ENCODE measurements at regions of chr9 and their contacts with region 1.

Region 1: GRCh38 chr9:121686930-121687541 is 35.6 kb downstream of the DAB2IP start:
- DNase-seq: peak; percentile 89
- ATAC-seq: peak; percentile 80
- H3K4me3 Mint-ChIP-seq: no peak overlapping the region
- H3K27ac Mint-ChIP-seq: no peak overlapping the region
- H3K4me1 Mint-ChIP-seq: peaks cover 21% of the 10 kb centered on the region
- H3K27me3 Mint-ChIP-seq: no peaks in the 10 kb centered on the region
- CTCF ChIP-seq: peak; percentile 68; the same call in 1 of the 2 replicates

Region 2: GRCh38 chr9:121598965-121599871 is 87.8 kb before region 1 on chr9:
- CTCF ChIA-PET with region 1: interaction called, 18 read pairs
- POLR2A ChIA-PET with region 1: no interaction called
- DNase-seq: peak; percentile 94
- ATAC-seq: peak; percentile 83
- H3K4me3 Mint-ChIP-seq: peak overlapping the region; percentile 80
- H3K27ac Mint-ChIP-seq: peak overlapping the region; percentile 36; the same call in 1 of the 2 replicates
- H3K4me1 Mint-ChIP-seq: peaks cover 36% of the 10 kb centered on the region
- H3K27me3 Mint-ChIP-seq: peaks cover 21% of the 10 kb centered on the region
- CTCF ChIP-seq: no peak

Region 3: DNA sequence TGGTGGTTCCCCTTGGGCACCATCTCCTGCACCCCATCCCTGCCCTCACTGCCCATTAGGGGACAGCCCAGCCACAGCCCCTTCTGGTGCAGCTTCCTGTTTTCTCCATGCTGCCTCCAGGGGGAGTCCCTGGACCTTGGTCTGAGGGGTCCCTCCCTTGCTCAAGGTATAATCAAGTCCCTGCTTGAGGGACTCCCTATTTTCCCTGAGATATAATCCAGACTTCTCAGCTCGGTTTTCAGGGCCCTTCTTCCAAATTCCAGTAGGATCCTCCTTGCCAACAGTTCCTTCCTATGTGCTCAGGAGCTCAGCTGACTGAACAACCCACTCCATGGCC is 66.0 kb before region 1 on chr9:
- CTCF ChIA-PET with region 1: interaction called, 29 read pairs
- POLR2A ChIA-PET with region 1: no interaction called
- DNase-seq: peak; percentile 74
- ATAC-seq: peak; percentile 97
- H3K4me3 Mint-ChIP-seq: no peak overlapping the region
- H3K27ac Mint-ChIP-seq: peak overlapping the region; percentile 32
- H3K4me1 Mint-ChIP-seq: peaks cover 20% of the 10 kb centered on the region
- H3K27me3 Mint-ChIP-seq: no peaks in the 10 kb centered on the region
- CTCF ChIP-seq: no peak

Region 4: DNA sequence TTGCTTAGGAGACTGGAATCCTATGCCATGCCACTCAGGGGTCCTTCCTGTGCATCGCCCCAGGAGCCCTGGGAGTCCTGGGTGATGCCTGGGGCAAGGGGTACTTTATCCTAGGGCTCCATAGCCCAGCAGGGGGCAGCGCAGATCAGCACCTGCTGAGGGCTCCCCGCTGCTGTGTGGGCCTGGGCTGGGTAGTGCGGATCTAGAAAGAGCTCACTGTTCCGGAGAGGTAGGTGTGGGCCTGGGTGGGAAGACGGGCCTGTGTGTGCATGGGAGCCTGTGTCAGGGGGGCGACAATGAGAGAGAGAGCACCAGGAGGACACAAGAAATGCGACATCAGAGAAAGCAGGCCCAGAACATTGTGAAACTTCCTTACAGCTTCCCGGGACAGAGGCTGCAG is 47.0 kb before region 1 on chr9:
- CTCF ChIA-PET with region 1: interaction called, 115 read pairs
- POLR2A ChIA-PET with region 1: no interaction called
- DNase-seq: peak; percentile 76
- ATAC-seq: peak; percentile 75
- H3K4me3 Mint-ChIP-seq: no peak overlapping the region
- H3K27ac Mint-ChIP-seq: 0 out of 2 replicates have a peak overlapping the region, but pooled peaks have one; percentile 23
- H3K4me1 Mint-ChIP-seq: peaks cover 40% of the 10 kb centered on the region
- H3K27me3 Mint-ChIP-seq: no peaks in the 10 kb centered on the region
- CTCF ChIP-seq: no peak; the same call in 1 of the 2 replicates

Region 5: DNA sequence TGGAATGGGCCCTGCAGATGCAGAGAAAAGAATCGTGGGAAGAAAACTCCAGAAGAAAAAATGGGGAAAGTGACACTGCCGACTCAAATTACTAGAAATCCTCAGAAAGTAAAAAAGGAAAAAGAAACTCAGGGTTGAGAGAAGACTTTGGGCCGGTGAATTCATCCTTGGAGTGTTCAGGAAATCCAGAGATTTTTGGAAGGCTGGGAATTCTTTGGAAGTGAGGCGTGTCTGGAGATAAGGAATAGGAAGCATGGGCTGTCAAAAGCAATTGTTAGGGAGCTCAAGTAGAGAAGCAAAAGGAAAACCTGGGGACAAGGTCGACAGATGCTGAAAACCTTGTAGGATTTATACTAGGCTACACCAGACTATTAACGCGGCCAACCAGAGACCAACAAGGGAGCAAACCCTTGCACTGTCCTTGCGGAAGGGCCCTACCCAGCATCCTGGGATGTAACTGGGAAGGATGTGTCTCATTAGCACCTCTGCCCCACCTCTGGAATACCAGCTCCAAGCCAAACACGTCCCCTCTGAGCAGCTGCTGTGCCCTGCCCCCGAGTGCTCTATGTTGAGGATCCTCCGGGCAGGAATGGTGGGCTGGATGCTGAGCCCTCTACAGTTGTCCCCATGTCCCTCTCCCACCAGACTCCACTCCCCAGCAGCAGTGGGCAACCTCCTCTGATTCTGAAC is 24.0 kb before region 1 on chr9:
- CTCF ChIA-PET with region 1: interaction called, 17 read pairs
- POLR2A ChIA-PET with region 1: no interaction called
- DNase-seq: no peak
- ATAC-seq: peak; percentile 73
- H3K4me3 Mint-ChIP-seq: no peak overlapping the region
- H3K27ac Mint-ChIP-seq: no peak overlapping the region
- H3K4me1 Mint-ChIP-seq: peaks cover 25% of the 10 kb centered on the region
- H3K27me3 Mint-ChIP-seq: no peaks in the 10 kb centered on the region
- CTCF ChIP-seq: no peak

Region 6: GRCh38 chr9:121698627-121699570 is 11.9 kb after region 1 on chr9:
- CTCF ChIA-PET with region 1: interaction called, 93 read pairs
- POLR2A ChIA-PET with region 1: no interaction called
- DNase-seq: peak; percentile 77
- ATAC-seq: peak; percentile 66
- H3K4me3 Mint-ChIP-seq: peak overlapping the region; percentile 56
- H3K27ac Mint-ChIP-seq: no peak overlapping the region
- H3K4me1 Mint-ChIP-seq: peaks cover 35% of the 10 kb centered on the region
- H3K27me3 Mint-ChIP-seq: peaks cover 3% of the 10 kb centered on the region; the same call in 1 of the 2 replicates
- CTCF ChIP-seq: no peak

Region 7: DNA sequence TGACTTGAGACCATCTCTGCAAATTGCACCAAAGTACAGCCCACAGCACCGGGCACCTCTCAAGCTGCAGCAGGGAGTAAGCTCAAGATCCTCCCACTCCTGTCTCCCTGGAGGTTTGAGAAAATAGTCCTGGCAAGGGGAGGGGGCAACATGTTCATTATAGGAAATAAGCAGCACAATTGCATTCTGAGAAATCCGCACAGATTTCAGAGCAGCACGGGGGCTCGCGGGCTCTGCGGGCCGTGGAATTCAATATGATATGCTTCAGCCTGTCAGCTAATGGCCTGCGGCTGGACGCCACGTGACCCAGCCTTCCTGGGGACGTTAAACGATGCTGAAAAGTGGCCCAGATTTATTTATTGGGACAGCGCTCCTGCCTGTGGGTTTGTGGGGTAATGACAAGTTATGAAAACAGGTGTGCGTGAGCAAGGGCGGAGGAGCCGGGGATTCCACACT is 120.8 kb after region 1 on chr9:
- CTCF ChIA-PET with region 1: no interaction called
- POLR2A ChIA-PET with region 1: no interaction called
- DNase-seq: no peak
- ATAC-seq: no peak
- H3K4me3 Mint-ChIP-seq: no peak overlapping the region
- H3K27ac Mint-ChIP-seq: no peak overlapping the region
- H3K4me1 Mint-ChIP-seq: peaks cover 10% of the 10 kb centered on the region
- H3K27me3 Mint-ChIP-seq: peaks cover 3% of the 10 kb centered on the region
- CTCF ChIP-seq: no peak

Region 8: DNA sequence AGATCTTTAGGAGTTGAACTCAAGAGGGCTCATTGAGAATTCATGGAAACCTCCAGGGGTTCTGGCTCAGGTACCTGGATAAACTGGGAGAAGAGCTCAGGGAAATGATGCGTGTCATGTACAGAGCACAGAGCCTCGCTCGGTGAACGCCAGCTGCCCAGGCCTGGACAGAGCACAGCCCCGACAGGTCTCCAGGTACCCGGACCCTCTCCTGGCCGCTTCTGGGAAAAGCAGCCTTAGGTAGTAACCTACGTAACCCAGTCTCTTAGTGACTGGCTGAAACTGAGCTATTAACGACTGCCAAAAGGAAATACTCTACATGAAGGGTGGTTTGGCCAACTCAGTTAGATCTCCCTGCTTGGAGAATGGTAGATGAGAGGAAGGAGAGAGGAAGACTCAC is 248.7 kb after region 1 on chr9:
- CTCF ChIA-PET with region 1: interaction called, 15 read pairs
- POLR2A ChIA-PET with region 1: no interaction called
- DNase-seq: peak; percentile 50
- ATAC-seq: peak; percentile 96
- H3K4me3 Mint-ChIP-seq: no peak overlapping the region
- H3K27ac Mint-ChIP-seq: no peak overlapping the region
- H3K4me1 Mint-ChIP-seq: peaks cover 23% of the 10 kb centered on the region
- H3K27me3 Mint-ChIP-seq: peaks cover 2% of the 10 kb centered on the region; the same call in 1 of the 2 replicates
- CTCF ChIP-seq: no peak